HCT116 (cell line): ENCODE measurements at regions of chr5 and their contacts with region 1.

Region 1: GRCh38 chr5:170100066-170100943 is 5.4 kb upstream of the FOXI1 start:
- DNase-seq: peak; percentile 75
- ATAC-seq: peak; percentile 82
- H3K4me3 ChIP-seq: no peak overlapping the region
- H3K27ac ChIP-seq: no peak overlapping the region
- H3K4me1 ChIP-seq: no peaks in the 10 kb centered on the region
- H3K27me3 ChIP-seq: peaks cover 19% of the 10 kb centered on the region; the same call in 1 of the 2 replicates
- CTCF ChIP-seq: peak; percentile 58 to 89 (median 69)
- POLR2A ChIP-seq: no peak
- RAD21 ChIP-seq: peak; percentile 92

Region 2: DNA sequence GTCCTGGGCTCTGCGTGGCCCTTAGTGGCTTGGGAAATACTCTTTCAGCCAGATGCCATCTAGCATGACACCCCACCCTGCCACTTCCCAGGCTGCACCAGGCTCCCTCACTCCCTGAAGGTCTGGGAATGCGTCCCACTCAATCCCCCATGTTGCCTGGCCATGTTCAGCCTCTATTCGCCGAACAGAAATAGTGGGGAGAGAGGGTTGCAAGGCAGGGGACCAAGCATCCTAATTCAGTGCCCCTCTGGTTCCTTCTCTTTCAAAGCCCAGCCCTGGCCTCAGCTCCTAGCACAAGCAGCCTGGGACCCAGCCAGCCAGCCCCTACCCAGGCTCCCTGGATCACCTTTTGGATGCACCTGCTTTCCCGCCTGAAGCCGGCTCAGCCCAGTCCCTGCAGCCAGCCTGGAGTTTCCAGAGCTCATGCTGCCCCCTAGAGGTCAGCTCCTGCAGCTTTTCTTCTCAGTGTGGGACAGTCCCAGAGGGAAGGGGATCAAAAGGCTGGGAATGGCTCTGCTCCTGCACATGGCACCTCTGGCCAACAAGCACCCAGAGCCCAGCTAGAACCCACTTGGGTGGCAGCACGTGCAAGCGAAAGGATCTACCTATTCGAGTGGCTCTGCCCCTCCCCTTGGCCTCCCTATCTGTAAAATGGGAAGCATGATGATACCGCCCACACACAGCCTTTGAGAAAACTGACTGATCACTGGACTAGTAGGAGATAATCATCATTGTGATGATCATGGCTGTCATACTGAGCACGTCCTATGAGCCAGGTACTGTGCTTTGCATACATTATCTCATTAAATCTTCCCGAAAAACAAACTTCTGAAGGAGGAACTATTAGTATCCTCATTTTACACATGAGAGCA is 83.7 kb after region 1 on chr5:
- CTCF ChIA-PET with region 1: interaction called, 23 read pairs
- POLR2A ChIA-PET with region 1: no interaction called
- RAD21 ChIA-PET with region 1: interaction called, 5 to 7 read pairs
- intact Hi-C with region 1: loop called (anchors 1 kb)
- DNase-seq: peak; percentile 47
- ATAC-seq: peak; percentile 99
- H3K4me3 ChIP-seq: no peak overlapping the region
- H3K27ac ChIP-seq: no peak overlapping the region
- H3K4me1 ChIP-seq: no peaks in the 10 kb centered on the region
- H3K27me3 ChIP-seq: peaks cover 3% of the 10 kb centered on the region; the same call in 1 of the 2 replicates
- CTCF ChIP-seq: peak; percentile 84 to 90 (median 87)
- POLR2A ChIP-seq: no peak
- RAD21 ChIP-seq: peak; percentile 93

Region 3: GRCh38 chr5:170216266-170216864 is 116.1 kb after region 1 on chr5:
- CTCF ChIA-PET with region 1: interaction called, 40 read pairs
- POLR2A ChIA-PET with region 1: no interaction called
- RAD21 ChIA-PET with region 1: interaction called, 4 read pairs
- intact Hi-C with region 1: loop called (anchors 1 kb)
- DNase-seq: peak; percentile 35
- ATAC-seq: peak; percentile 71
- H3K4me3 ChIP-seq: no peak overlapping the region
- H3K27ac ChIP-seq: no peak overlapping the region
- H3K4me1 ChIP-seq: peaks cover 2 to 18% of the 10 kb centered on the region in 2 experiments; a peak in 2 of 4 replicates
- H3K27me3 ChIP-seq: no peaks in the 10 kb centered on the region; the same call in 1 of the 2 replicates
- CTCF ChIP-seq: peak; percentile 44 to 69 (median 66); a peak in 5 of 6 replicates
- POLR2A ChIP-seq: no peak
- RAD21 ChIP-seq: peak; percentile 87

Region 4: GRCh38 chr5:170338933-170339779 is 238.9 kb after region 1 on chr5:
- CTCF ChIA-PET with region 1: no interaction called
- POLR2A ChIA-PET with region 1: no interaction called
- RAD21 ChIA-PET with region 1: no interaction called
- intact Hi-C with region 1: loop called (anchors 1 kb)
- DNase-seq: peak; percentile 13
- ATAC-seq: peak; percentile 95
- H3K4me3 ChIP-seq: no peak overlapping the region
- H3K27ac ChIP-seq: no peak overlapping the region
- H3K4me1 ChIP-seq: no peaks in the 10 kb centered on the region
- H3K27me3 ChIP-seq: peaks cover 38% of the 10 kb centered on the region
- CTCF ChIP-seq: peak; percentile 79 to 99 (median 81)
- POLR2A ChIP-seq: no peak
- RAD21 ChIP-seq: peak; percentile 88

Region 5: GRCh38 chr5:170420780-170421412 is 320.6 kb after region 1 on chr5:
- CTCF ChIA-PET with region 1: no interaction called
- POLR2A ChIA-PET with region 1: no interaction called
- RAD21 ChIA-PET with region 1: no interaction called
- intact Hi-C with region 1: loop called (anchors 1 kb)
- DNase-seq: peak; percentile 68
- ATAC-seq: peak; percentile 93
- H3K4me3 ChIP-seq: no peak overlapping the region
- H3K27ac ChIP-seq: no peak overlapping the region
- H3K4me1 ChIP-seq: no peaks in the 10 kb centered on the region
- H3K27me3 ChIP-seq: peaks cover 15% of the 10 kb centered on the region
- CTCF ChIP-seq: peak; percentile 58 to 82 (median 81)
- POLR2A ChIP-seq: no peak
- RAD21 ChIP-seq: peak; percentile 68